CD8-positive, alpha-beta T cell (primary cell): ENCODE measurements at regions of chr10 and their contacts with region 1.

Region 1: DNA sequence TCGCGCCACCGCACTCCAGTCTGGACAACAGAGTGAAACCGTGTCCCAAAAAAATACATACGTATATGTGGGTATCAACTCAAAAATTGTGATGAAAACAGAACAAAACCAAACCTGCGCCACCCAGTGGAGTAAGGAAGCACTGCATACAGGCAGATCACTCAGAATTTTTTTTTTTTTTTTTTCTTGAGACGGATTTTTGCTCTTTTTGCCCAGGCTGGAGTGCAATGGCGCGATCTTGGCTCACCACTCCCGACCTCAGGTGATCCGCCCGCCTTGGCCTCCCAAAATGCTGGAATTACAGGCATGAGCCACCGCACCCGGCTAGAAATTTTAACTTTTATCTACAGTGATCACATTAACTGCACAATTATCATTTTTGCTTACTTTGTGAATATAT is 9.1 kb upstream of the TMEM236 start:
- DNase-seq: peak; percentile 44 to 77 (median 67)
- ATAC-seq: peak; percentile 69
- H3K4me3 ChIP-seq: no peak overlapping the region
- H3K4me3 Mint-ChIP-seq: no peak overlapping the region
- H3K27ac ChIP-seq: no peak overlapping the region
- H3K27ac Mint-ChIP-seq: no peak overlapping the region
- H3K4me1 ChIP-seq: no peaks in the 10 kb centered on the region
- H3K4me1 Mint-ChIP-seq: peaks cover 4% of the 10 kb centered on the region
- H3K27me3 ChIP-seq: no peaks in the 10 kb centered on the region
- H3K27me3 Mint-ChIP-seq: no peaks in the 10 kb centered on the region
- CTCF ChIP-seq: peak; percentile 76

Region 2: DNA sequence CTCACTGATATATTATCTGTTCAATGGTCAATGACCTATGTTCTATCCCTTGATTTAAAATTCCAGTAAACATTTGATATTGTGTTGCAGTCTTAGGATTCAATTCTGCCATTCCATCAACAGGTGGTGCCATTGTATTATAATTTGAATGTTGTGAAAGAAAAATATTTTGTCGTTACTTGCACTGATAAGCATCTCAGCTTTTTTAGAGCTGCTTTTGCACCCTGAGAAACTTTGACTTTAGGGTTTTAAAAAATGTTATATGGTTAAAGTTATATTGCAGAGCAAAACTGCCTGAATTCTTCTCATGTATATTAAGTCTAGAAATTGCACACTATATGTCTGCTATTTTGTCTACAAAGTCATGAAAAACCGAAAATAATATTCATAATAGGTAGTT is 1863.9 kb before region 1 on chr10:
- CTCF ChIA-PET with region 1: no interaction called
- POLR2A ChIA-PET with region 1: no interaction called
- intact Hi-C with region 1: loop called in 1 of 2 experiments (anchors 10 kb)
- DNase-seq: peak in 2 of 9 experiments; percentile 32 to 52
- ATAC-seq: peak; percentile 52
- H3K4me3 ChIP-seq: no peak overlapping the region
- H3K4me3 Mint-ChIP-seq: no peak overlapping the region
- H3K27ac ChIP-seq: no peak overlapping the region
- H3K27ac Mint-ChIP-seq: no peak overlapping the region
- H3K4me1 ChIP-seq: no peaks in the 10 kb centered on the region
- H3K4me1 Mint-ChIP-seq: no peaks in the 10 kb centered on the region
- H3K27me3 ChIP-seq: peaks cover 0 to 3% of the 10 kb centered on the region in 2 experiments
- H3K27me3 Mint-ChIP-seq: peaks cover 51% of the 10 kb centered on the region
- CTCF ChIP-seq: peak; percentile 67

Region 3: DNA sequence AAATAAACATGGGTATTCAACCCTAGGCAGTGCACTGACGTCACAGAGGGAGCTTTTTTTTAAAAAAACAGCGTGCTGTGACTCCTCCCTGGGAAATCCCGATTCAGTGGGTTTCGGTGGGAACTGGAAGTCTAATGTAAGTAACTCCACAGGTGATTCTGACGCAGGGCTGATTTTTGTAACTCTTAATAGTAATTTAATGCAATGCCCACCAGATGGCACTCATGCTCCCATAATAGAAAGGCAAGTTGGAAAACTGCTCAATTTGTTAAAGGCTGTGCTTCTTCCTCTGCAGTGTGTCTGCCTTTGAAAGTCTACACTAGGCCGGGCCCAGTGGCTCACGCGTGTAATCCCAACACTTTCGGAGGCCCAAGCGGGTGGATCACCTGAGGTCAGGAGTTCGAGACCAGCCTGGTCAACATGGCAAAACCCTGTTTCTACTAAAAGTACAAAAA is 914.8 kb before region 1 on chr10:
- CTCF ChIA-PET with region 1: no interaction called
- POLR2A ChIA-PET with region 1: no interaction called
- intact Hi-C with region 1: loop called in 1 of 2 experiments (anchors 5 kb)
- DNase-seq: peak in 8 of 9 experiments; percentile 47 to 87 (median 63)
- ATAC-seq: peak; percentile 96
- H3K4me3 ChIP-seq: no peak overlapping the region
- H3K4me3 Mint-ChIP-seq: no peak overlapping the region
- H3K27ac ChIP-seq: no peak overlapping the region
- H3K27ac Mint-ChIP-seq: peak overlapping the region; percentile 45
- H3K4me1 ChIP-seq: no peaks in the 10 kb centered on the region
- H3K4me1 Mint-ChIP-seq: peaks cover 4% of the 10 kb centered on the region
- H3K27me3 ChIP-seq: no peaks in the 10 kb centered on the region
- H3K27me3 Mint-ChIP-seq: no peaks in the 10 kb centered on the region
- CTCF ChIP-seq: peak; percentile 69

Region 4: DNA sequence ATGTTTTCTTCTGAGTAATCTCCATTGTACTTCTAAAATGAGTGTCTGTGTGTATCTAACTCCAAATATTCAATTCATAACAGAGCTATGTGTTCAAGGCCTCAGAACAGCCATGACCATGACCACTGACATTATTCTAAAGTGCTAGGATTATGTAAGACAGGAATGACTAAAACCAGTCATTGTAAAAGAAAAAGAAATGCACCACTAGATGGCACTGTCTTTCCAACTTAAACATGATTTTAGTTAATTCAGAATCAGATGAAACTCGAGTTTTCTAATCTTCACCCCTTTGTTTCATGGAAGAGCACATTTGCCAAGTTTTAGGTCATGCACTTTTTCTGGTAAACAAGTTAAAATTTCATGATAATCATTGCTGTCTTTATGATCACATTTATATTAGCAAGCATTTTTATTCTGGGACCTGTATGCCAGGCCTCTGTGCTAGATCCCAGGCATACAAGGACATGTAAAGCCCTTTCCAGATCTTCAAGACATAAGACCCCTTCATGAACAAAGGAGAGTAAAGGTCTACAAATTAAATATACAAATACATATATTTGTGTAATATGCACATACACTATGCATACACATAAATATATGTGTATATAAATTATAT is 899.6 kb before region 1 on chr10:
- CTCF ChIA-PET with region 1: no interaction called
- POLR2A ChIA-PET with region 1: no interaction called
- intact Hi-C with region 1: loop called in 1 of 2 experiments (anchors 5 kb)
- DNase-seq: peak in 3 of 9 experiments; percentile 16 to 78 (median 63)
- ATAC-seq: peak; percentile 51
- H3K4me3 ChIP-seq: no peak overlapping the region
- H3K4me3 Mint-ChIP-seq: no peak overlapping the region
- H3K27ac ChIP-seq: no peak overlapping the region
- H3K27ac Mint-ChIP-seq: no peak overlapping the region
- H3K4me1 ChIP-seq: no peaks in the 10 kb centered on the region
- H3K4me1 Mint-ChIP-seq: no peaks in the 10 kb centered on the region
- H3K27me3 ChIP-seq: no peaks in the 10 kb centered on the region
- H3K27me3 Mint-ChIP-seq: no peaks in the 10 kb centered on the region
- CTCF ChIP-seq: peak; percentile 72

Region 5: DNA sequence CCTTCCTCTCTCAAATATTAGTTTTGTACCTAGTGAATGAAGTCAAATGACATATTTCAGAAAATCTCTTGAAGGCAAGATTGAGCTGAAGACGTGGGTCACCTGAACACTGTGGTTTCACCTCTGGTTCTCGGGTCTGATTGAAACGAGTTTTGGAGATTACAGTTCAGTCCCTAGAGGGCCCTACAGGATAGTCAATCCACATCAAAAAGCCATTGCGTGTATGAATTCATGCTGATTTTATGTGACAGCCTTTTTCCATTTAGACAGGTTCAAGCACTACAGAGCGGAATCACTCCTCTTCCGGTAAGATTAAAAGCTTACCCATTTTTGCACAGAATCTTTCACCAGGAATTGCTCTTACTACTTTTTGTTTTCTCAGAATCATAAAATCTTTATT is 452.7 kb before region 1 on chr10:
- CTCF ChIA-PET with region 1: interaction called, 4 read pairs
- POLR2A ChIA-PET with region 1: no interaction called
- intact Hi-C with region 1: loop called (anchors 5 to 10 kb)
- DNase-seq: peak in 2 of 9 experiments; percentile 24 to 47
- ATAC-seq: no peak
- H3K4me3 ChIP-seq: no peak overlapping the region
- H3K4me3 Mint-ChIP-seq: no peak overlapping the region
- H3K27ac ChIP-seq: no peak overlapping the region
- H3K27ac Mint-ChIP-seq: no peak overlapping the region
- H3K4me1 ChIP-seq: no peaks in the 10 kb centered on the region
- H3K4me1 Mint-ChIP-seq: peaks cover 4% of the 10 kb centered on the region
- H3K27me3 ChIP-seq: no peaks in the 10 kb centered on the region
- H3K27me3 Mint-ChIP-seq: peaks cover 18% of the 10 kb centered on the region
- CTCF ChIP-seq: no peak

Region 6: GRCh38 chr10:17409170-17409733 is 333.7 kb before region 1 on chr10:
- CTCF ChIA-PET with region 1: interaction called, 3 read pairs
- POLR2A ChIA-PET with region 1: no interaction called
- intact Hi-C with region 1: loop called in 1 of 2 experiments (anchors 10 kb)
- DNase-seq: peak in 3 of 9 experiments; percentile 49 to 64 (median 56)
- ATAC-seq: peak; percentile 73
- H3K4me3 ChIP-seq: no peak overlapping the region
- H3K4me3 Mint-ChIP-seq: no peak overlapping the region
- H3K27ac ChIP-seq: no peak overlapping the region
- H3K27ac Mint-ChIP-seq: peak overlapping the region; percentile 53
- H3K4me1 ChIP-seq: peaks cover 15% of the 10 kb centered on the region
- H3K4me1 Mint-ChIP-seq: peaks cover 13% of the 10 kb centered on the region
- H3K27me3 ChIP-seq: no peaks in the 10 kb centered on the region
- H3K27me3 Mint-ChIP-seq: no peaks in the 10 kb centered on the region
- CTCF ChIP-seq: peak; percentile 69

Region 7: DNA sequence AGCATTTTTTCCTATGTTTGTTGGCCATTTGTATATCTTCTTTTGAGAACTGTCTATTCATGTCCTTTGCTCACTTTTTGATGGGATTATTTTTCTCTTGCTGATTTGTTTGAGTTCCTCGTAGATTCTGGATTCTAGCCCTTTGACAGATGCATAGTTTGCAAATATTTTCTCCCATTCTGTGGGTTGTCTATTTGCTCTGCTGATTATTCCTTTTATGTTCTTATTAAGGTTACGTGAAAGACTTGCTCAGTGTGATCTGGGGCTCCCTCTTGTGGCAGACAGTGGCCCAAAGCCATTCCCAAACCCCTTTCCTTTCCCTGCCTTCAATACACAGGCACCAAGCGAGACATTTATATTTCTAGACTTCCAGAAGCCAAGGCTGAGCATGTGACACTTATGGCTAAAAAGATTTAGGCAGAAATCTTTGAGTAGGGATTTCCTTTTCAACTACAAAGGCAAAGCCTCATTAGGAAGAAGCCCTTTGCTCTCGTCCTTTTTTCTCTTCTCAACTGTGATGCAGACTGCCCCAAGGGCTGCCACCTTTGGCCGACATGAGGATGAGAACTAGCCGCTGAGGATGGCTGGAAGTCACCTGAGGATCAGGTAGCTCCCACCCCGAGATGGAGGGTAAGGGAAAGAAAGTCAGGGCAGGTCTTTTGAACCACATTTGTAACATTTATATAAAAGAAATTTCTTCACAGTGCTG is 312.1 kb before region 1 on chr10:
- CTCF ChIA-PET with region 1: no interaction called
- POLR2A ChIA-PET with region 1: no interaction called
- intact Hi-C with region 1: no loop called
- DNase-seq: peak in 8 of 9 experiments; percentile 42 to 80 (median 72)
- ATAC-seq: no peak
- H3K4me3 ChIP-seq: no peak overlapping the region
- H3K4me3 Mint-ChIP-seq: no peak overlapping the region
- H3K27ac ChIP-seq: no peak overlapping the region
- H3K27ac Mint-ChIP-seq: no peak overlapping the region
- H3K4me1 ChIP-seq: peaks cover 49% of the 10 kb centered on the region
- H3K4me1 Mint-ChIP-seq: peaks cover 50% of the 10 kb centered on the region
- H3K27me3 ChIP-seq: no peaks in the 10 kb centered on the region
- H3K27me3 Mint-ChIP-seq: peaks cover 2% of the 10 kb centered on the region
- CTCF ChIP-seq: peak; percentile 95

Region 8: DNA sequence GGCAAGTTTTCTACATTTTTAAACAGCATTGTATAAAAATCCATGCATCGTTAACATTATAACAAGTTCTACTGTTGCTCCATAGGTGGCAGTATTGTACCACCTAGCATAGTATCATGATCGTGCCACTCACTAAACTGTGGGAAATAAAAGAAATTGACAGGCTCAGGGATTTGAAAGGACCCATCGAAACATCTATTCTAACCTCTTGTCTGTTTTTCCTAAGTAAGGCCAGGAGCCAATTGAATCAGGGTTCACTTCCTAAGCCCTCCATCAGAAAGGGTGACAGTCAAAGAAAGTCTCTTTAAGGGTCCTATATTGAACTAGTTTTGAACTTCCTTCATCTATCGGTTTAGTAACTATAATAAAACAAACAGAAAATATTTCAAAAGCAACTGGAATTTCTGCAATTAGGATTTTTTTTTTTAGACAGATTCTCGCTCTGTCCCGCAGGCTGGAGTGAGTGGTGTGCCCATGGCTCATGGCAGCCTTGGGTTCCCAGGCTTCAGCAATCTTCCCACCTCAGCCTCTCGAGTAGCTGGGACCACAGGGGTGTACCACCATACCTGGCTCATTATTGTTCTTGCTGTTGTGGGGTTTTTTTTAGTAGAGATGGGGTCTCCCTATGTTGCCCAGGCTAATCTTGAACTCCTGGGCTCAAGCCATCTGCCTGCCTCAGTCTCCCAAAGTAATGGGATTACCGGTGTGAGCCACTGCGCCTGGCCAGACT is 135.2 kb before region 1 on chr10:
- CTCF ChIA-PET with region 1: interaction called, 28 read pairs
- POLR2A ChIA-PET with region 1: no interaction called
- intact Hi-C with region 1: loop called (anchors 1 kb)
- DNase-seq: peak in 3 of 9 experiments; percentile 22 to 75 (median 61)
- ATAC-seq: peak; percentile 69
- H3K4me3 ChIP-seq: no peak overlapping the region
- H3K4me3 Mint-ChIP-seq: no peak overlapping the region
- H3K27ac ChIP-seq: no peak overlapping the region
- H3K27ac Mint-ChIP-seq: no peak overlapping the region
- H3K4me1 ChIP-seq: no peaks in the 10 kb centered on the region
- H3K4me1 Mint-ChIP-seq: peaks cover 2% of the 10 kb centered on the region
- H3K27me3 ChIP-seq: no peaks in the 10 kb centered on the region
- H3K27me3 Mint-ChIP-seq: peaks cover 2% of the 10 kb centered on the region
- CTCF ChIP-seq: peak; percentile 97